Activated CD8-positive, alpha-beta T cell treated with anti-CD3 and anti-CD28 coated beads for 36 hours (primary cell): ENCODE measurements at regions of chr1 and their contacts with region 1.

Region 1: GRCh38 chr1:39973503-39974135 is 18.7 kb downstream of the MFSD2A start:
- DNase-seq: peak; percentile 84
- ATAC-seq: peak; percentile 85
- H3K4me3 Mint-ChIP-seq: no peak overlapping the region
- H3K27ac Mint-ChIP-seq: no peak overlapping the region
- H3K4me1 Mint-ChIP-seq: no peaks in the 10 kb centered on the region
- H3K27me3 Mint-ChIP-seq: no peaks in the 10 kb centered on the region
- CTCF ChIP-seq: peak; percentile 99

Region 2: DNA sequence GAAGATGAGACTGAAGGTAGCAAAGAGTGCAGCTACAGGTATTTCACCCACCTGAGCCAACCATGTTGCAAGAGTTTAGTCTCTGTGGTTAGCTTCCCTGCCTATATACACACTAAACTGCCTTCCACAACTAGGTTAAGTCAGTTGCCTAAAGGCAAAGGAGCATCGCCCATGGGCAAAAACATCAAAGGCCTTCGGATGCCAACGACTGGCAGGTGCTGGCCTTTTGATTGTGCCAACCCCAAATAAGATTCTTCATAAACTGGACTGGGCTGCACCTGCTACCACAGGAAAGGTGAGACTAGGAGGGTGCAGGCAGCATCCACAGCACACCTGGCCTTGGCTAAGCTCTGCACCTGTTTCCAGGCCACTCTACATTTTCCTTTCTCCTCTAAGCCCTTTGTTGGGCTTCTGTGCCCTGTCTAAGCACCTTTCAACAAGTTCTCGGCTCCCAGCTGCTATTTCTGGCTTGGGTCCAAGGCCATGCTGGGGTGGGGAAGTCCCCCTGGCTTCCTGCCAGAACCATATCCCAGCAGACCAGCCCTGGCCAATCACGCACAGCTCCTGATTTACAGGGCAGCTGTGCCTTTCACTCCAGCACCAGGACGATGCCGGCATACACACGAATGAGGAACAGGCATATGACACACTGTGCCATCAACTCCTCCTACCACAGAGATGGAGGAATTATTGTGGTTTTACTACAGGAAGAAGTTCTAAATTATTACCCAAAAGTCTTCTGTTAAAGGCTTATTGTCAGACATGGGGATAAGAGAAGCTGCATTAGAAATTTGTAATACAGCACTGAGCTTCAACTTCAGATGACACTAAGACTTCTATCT is 128.1 kb before region 1 on chr1:
- CTCF ChIA-PET with region 1: interaction called, 11 read pairs
- POLR2A ChIA-PET with region 1: no interaction called
- intact Hi-C with region 1: no loop called
- DNase-seq: peak; percentile 90
- ATAC-seq: peak; percentile 95
- H3K4me3 Mint-ChIP-seq: no peak overlapping the region
- H3K27ac Mint-ChIP-seq: peak overlapping the region; percentile 87
- H3K4me1 Mint-ChIP-seq: peaks cover 55% of the 10 kb centered on the region
- H3K27me3 Mint-ChIP-seq: no peaks in the 10 kb centered on the region
- CTCF ChIP-seq: no peak

Region 3: GRCh38 chr1:39907528-39908453 is 65.8 kb before region 1 on chr1:
- CTCF ChIA-PET with region 1: interaction called, 13 read pairs
- POLR2A ChIA-PET with region 1: interaction called, 3 read pairs
- intact Hi-C with region 1: no loop called
- DNase-seq: no peak
- ATAC-seq: no peak
- H3K4me3 Mint-ChIP-seq: no peak overlapping the region
- H3K27ac Mint-ChIP-seq: no peak overlapping the region
- H3K4me1 Mint-ChIP-seq: peaks cover 2% of the 10 kb centered on the region
- H3K27me3 Mint-ChIP-seq: peaks cover 41% of the 10 kb centered on the region
- CTCF ChIP-seq: no peak

Region 4: DNA sequence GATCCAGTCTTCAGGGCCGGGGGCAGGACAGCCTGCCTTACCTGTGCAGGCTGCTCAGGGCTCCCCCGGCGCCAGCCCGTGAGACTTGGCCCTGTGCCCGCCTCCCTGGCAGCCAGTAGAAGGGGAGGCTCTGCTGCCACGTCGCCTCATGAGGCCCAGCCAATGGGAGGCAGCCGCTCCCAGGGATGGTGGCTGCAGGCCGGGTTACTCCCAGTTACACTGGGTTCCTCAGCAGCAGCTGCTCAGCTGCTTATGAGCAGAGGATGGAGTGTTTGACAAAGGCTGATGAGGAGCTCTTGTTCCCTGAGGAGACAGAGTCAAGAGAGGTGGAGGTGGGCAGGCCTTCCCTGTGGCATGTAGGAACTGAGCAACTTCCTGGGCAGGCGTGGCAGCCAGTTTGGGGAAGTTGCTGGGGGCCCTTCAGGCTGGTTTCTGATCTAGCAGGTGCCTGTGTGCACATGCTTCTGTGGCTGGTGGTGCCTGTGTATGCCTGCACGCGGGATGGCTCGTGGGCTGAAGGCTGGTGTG is 13.1 kb before region 1 on chr1:
- CTCF ChIA-PET with region 1: interaction called, 25 read pairs
- POLR2A ChIA-PET with region 1: interaction called, 11 read pairs
- intact Hi-C with region 1: no loop called
- DNase-seq: peak; percentile 60
- ATAC-seq: peak; percentile 58
- H3K4me3 Mint-ChIP-seq: peak overlapping the region; percentile 44
- H3K27ac Mint-ChIP-seq: peak overlapping the region; percentile 77
- H3K4me1 Mint-ChIP-seq: peaks cover 32% of the 10 kb centered on the region
- H3K27me3 Mint-ChIP-seq: no peaks in the 10 kb centered on the region
- CTCF ChIP-seq: no peak

Region 5: DNA sequence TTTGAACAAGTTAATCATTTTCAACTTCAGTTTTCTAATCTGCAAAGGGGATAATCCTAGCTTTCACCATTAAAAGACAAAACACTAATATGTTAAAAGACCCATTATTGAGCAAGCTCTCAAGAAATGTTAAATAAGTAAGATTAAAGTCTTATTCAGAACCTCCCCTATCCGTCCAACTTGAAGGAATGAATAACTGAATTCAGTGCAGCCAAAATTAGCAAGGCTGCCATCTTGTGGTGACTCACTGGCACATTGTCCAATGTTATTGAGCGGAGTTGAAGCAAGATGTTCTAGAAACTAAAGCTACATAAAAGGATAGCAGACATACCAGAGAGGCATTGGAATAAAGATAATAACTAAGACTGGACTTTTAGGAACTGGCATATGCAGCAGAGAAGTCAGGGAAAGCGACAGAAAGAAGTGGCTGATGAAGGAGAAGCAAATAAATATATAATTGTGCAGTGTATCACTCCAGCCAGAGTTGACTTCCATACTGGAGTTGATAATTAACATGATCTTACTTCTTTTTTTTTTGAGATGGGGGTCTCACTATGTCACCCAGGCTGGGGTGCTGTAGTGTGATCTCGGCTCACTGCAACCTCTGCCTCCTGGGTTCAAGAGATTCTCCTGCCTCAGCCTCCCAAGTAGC is 58.7 kb after region 1 on chr1:
- CTCF ChIA-PET with region 1: interaction called, 37 read pairs
- POLR2A ChIA-PET with region 1: no interaction called
- intact Hi-C with region 1: no loop called
- DNase-seq: peak; percentile 68
- ATAC-seq: peak; percentile 69
- H3K4me3 Mint-ChIP-seq: no peak overlapping the region
- H3K27ac Mint-ChIP-seq: no peak overlapping the region
- H3K4me1 Mint-ChIP-seq: peaks cover 33% of the 10 kb centered on the region
- H3K27me3 Mint-ChIP-seq: no peaks in the 10 kb centered on the region
- CTCF ChIP-seq: peak; percentile 63